ENCODE measurements at regions of chr7 and their contacts with region 1.

Region 1: GRCh38 chr7:104643587-104644217 is 315.3 kb downstream of the LHFPL3 start:
- DNase-seq: no peak
- CTCF ChIP-seq: peak; percentile 28

Region 2: GRCh38 chr7:103447073-103447951 is 1196.4 kb before region 1 on chr7:
- CTCF ChIA-PET with region 1: no interaction called
- POLR2A ChIA-PET with region 1: no interaction called
- DNase-seq: peak; percentile 62
- CTCF ChIP-seq: peak; percentile 69

Region 3: DNA sequence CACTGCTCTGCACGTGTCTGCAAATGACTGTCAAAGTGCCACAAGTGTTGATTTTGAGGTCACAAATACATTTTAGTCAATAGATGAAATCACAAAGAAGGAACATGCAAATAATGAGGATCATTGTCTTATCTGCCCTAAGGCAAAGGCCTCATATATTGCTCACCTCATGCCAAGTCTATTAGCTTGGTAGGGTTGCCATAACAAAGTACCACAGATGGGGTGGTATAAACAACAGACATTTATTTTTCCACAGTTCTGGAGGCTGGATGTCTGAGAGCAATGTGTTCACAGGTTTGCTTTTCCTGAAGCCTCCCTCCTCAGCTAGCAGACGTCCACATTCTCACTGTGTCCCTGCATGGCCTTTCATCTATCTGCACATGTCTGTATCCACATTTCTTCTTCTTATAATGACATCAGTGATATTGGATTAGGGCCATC is 713.8 kb before region 1 on chr7:
- CTCF ChIA-PET with region 1: no interaction called
- POLR2A ChIA-PET with region 1: no interaction called
- DNase-seq: no peak
- CTCF ChIP-seq: no peak

Region 4: DNA sequence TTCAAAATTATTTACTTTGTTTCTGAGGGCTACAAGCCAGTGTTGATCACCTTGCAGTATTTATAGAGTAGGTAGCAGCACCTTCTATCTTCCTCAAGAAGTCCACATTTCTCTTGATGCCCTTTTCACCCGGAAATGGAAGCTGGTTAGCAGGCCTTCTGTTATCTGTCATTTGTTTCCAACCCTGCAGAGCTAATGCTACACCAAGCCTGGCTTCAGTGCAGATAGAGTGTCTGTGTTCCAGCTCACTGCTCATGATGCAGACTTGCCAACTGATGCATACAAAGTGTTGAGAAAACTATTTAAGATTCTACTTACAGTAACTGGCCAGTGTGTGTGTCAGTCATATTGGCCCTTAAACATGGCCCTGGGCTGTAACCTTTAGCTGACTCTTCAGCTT is 14.3 kb before region 1 on chr7:
- CTCF ChIA-PET with region 1: interaction called, 14 read pairs
- POLR2A ChIA-PET with region 1: no interaction called
- DNase-seq: no peak
- CTCF ChIP-seq: no peak

Region 5: DNA sequence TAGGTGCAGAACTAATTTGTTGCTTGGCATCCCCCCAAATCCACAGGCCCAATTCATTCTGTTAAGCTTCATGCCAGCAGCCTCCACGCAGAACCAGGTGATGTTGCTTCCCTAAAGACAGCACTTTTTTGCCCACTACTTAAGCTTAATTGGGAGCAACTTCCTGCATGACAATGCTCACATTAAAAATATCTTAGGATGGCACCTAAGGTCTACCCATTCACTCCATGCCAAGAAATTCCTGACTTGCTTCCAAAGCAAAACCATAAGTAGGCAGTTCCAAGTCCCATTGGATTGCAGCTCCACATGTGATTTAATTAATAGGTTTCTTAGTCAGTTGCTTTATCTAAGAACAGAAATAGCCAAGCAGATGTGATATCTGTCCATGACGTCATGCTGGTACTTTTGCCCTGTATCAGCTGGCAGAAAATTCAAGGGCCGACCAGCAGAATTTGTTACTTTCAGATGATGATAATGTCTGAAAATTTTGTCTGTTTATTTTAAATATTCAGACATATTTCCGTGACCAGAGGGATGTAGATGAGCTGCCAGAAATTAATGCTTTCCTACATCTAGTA is 10.2 kb after region 1 on chr7:
- CTCF ChIA-PET with region 1: interaction called, 12 read pairs
- POLR2A ChIA-PET with region 1: no interaction called
- DNase-seq: no peak
- CTCF ChIP-seq: no peak

Region 6: DNA sequence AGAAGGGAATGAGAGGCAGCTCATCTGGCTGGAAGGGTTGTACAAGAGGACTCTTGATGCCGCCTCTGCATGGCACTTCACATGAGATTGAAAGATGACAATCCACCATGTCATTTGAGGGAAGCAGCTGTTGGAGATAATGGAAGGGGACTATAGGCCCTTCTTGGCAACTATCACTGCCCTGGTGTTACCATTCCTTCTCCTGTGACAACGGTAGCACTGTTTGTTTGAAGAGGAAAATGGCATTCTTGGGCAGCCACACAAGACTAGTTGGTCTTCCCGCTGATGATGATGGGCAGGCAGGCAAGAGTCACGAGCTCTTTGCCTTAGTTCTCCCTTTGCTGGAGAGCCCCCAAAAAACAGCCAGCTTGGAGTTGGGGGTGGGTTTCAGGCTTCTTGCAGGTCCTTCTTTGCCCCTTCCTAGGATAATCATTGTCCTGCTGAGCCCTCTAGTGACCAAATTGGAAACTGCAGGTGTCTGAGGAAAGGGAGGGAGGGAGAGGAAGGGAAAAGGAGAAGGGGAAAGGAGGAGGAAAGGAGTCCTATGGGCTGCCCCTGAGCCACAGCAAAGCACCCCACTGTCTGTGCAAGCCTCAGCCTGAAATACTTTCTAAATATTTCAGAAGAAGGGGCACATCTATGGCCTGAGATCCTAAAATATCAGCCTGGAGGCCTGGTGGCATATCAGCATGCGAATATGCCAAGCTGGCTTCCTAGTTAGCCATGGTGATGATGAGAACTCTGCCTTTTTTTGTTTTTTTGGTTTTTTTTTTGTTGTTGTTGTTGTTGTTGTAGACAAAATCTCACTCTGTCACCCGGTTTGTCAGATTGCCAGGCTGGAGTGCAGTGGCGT is 204.7 kb after region 1 on chr7:
- CTCF ChIA-PET with region 1: interaction called, 18 read pairs
- POLR2A ChIA-PET with region 1: no interaction called
- DNase-seq: peak; percentile 55
- CTCF ChIP-seq: peak; percentile 97